Left cardiac atrium (tissue), 4 donors: ENCODE measurements at regions of chr9 and their contacts with region 1.

Region 1: GRCh38 chr9:70470050-70471015 is 55.9 kb upstream of the KLF9 start:
- DNase-seq: peak; percentile 69
- ATAC-seq: peak; percentile 88 to 96

Region 2: DNA sequence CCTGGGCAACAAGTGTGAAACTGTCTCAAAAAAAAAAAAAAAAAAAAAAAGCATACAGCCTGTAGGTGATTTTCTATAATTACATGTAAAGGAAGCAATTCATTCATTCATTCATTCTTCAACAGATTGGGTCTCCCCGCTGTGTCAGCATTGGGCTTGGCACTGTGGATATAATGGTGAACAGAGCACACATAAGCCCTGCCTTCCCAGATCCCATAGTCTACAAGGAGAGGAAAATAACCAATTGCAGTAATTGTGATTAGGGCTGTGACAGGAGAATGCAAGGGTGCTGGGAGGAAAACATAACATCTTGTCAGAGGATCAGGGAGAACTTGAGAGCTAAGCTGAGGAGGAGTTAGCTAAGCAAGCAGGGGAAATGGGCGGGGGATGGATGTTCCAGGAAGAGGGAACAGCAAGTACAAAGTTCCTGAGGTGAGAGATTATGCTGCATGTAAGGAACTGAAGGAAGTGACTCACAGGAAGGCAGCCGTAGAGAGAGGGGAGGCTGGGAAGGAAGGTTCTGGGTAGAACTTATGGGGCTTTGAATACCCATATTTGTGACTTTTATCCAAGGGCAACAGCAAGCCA is 31.9 kb before region 1 on chr9:
- intact Hi-C with region 1: loop called in 1 of 2 experiments (anchors 5 kb)
- DNase-seq: peak; percentile 83
- ATAC-seq: peak; percentile 80 to 93